ENCODE measurements at regions of chr2 and their contacts with region 1.

Region 1: DNA sequence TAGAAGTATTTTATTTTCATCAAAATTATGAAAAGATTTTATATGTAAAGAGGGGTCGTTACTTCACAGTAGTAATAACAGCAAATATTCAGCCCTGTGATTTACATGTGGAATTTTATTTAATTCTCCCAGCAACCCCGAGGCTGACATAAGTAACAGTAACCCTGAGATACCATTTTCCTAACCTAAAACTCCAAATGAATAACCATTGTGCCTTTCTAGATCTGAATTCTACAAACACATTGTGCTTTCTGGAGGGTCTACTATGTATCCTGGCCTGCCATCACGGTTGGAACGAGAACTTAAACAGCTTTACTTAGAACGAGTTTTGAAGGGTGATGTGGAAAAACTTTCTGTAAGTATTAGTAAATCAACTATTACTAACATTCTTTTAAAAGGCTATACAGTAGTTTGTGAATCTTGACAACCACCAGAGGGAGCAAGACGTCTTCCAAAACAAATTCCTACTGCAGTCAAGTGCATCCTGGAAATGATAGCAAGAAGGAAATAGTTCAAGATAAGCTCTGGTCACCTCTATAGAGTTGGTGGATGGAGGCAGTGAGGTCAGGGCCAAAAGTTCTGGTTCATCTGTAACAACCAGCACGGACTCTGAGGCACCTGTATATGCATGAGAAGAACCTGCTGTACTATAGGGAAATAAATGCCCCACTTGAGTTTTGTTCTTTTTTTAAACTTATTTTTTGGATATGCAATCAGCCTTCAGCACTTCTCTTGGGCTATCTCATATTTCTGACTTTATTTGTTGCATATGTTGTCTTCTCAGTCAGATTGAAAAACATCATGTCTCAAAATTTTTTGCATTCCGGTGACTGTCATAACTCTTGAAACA is 37.4 kb downstream of the ACTR2 start:
- DNase-seq: peak; percentile 70
- H3K4me3 Mint-ChIP-seq: no peak overlapping the region
- H3K27ac Mint-ChIP-seq: no peak overlapping the region
- H3K4me1 Mint-ChIP-seq: peaks cover 12% of the 10 kb centered on the region
- H3K27me3 Mint-ChIP-seq: no peaks in the 10 kb centered on the region

Region 2: DNA sequence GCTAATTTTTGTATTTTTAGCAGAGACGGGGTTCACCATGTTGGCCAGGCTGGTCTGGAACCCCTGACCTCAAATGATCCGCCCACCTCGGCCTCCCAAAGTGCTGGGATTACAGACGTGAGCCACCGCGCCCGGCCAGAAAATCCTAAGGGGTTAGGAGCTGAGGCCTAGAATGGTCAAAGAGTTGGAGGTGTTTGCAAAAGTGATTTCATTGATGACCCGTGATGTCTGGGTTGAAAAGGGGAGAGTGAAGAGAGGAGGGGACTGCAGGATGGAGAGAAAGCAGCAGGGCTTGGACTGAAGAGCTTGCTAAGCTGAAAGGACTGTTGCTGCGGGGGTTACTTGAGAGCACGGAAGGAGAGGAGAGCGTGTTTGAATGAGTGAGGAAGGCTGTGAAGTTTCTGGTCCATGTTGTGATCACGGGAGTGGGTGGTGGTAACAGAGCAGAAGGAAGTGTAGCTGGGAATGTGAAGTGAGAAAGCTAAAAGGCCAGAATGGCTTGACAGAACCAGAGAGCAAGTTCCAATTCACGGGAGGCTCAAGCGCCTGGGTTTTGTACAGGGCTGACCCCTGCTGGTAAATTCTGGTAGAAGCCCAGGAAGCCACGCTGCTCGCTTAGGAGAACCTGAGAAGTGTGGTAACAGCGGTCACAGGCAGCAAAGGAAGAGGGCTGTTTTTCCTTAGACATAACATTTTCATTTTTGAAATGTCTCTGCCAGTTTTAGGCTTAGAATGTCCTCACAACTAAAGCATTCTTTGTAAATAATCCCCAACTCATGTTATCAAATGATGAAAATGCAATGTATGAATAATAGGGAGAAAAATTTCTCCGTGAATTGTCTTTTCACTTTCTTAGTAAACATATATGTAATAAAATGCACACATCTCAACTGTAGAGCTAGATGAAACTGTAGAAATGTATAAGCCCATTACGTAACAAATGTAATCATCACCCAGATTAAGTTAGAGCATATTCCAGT is 77.9 kb before region 1 on chr2:
- intact Hi-C with region 1: no loop called
- DNase-seq: peak; percentile 90
- H3K4me3 Mint-ChIP-seq: no peak overlapping the region
- H3K27ac Mint-ChIP-seq: no peak overlapping the region
- H3K4me1 Mint-ChIP-seq: peaks cover 9% of the 10 kb centered on the region
- H3K27me3 Mint-ChIP-seq: peaks cover 27% of the 10 kb centered on the region

Region 3: DNA sequence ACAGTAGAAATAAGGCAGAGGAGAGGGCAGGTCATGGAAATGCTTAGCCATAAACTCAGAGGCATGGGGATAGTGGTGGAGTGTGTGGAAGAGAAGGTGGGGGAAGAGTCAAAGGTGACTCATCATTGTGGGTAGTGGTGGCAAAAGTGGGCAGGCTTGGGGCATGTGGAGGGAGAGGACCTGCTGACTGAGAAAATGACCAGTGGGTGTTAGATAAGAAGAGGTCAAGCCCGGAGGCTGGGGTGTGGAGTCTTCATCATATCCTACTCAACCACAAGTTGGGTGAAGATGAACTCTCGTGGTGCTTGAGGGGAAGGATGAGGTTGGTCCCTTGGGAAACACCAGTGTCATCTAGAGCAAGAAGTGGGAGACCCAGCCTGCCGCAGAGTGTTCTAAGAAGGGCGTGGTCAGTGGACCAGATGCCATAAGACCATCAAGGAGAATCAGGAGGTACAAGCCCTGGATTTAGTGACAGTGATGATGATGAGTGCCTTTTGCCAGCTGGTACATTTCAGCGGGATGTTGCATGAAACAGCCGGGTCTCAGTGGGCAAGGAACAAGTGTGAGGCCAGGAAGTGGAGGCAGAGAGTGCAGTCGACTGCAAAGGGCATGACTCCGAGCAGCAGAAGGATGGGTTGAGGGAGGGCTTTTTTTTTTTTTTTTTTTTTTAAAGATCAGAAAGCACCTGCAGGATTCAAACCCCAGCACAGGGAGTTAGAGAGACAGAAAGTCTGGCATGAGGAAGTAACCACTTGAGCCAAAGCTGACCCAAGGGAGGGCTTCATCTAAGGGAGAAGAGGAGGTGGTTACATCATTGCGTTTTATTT is 289.9 kb after region 1 on chr2:
- intact Hi-C with region 1: loop called (anchors 1 kb)
- DNase-seq: no peak
- H3K4me3 Mint-ChIP-seq: no peak overlapping the region
- H3K27ac Mint-ChIP-seq: peak overlapping the region; percentile 57
- H3K4me1 Mint-ChIP-seq: peaks cover 16% of the 10 kb centered on the region
- H3K27me3 Mint-ChIP-seq: peaks cover 30% of the 10 kb centered on the region

Measured in activated CD4-positive, alpha-beta T cell treated with anti-CD3 and anti-CD28 coated beads, Interleukin-2, amount 10 ng/mL, durations not matched to agents 24 days and 14 days (primary cell).